CD8-positive, alpha-beta T cell (primary cell): ENCODE measurements at regions of chr13 and their contacts with region 1.

Region 1: DNA sequence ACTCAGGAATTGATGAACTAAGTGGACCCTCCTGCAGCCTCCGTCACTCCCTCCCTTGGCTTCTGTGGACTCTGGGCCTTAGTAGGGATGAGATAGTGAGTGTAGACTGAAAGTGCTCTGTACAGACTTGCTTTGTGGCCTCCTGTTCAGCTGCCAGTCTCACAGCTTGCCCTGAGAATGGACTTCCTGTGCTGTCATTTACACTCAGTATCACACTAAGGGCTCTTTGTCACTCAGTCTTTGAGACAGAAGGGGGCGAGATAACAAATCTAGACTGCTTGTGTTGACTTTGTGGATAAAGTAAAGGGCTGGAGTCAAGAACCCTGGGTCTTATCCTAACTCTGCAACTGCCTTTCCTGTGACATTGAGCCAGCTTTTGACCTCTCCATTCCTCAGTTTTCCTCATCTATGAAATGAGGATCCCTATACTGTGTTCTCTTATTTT is 21.0 kb upstream of the SPRY2 start:
- DNase-seq: peak in 1 of 9 experiments; percentile 45
- ATAC-seq: peak; percentile 40
- H3K4me3 ChIP-seq: no peak overlapping the region
- H3K4me3 Mint-ChIP-seq: no peak overlapping the region
- H3K27ac ChIP-seq: no peak overlapping the region
- H3K27ac Mint-ChIP-seq: no peak overlapping the region
- H3K4me1 ChIP-seq: no peaks in the 10 kb centered on the region
- H3K4me1 Mint-ChIP-seq: peaks cover 2% of the 10 kb centered on the region
- H3K27me3 ChIP-seq: no peaks in the 10 kb centered on the region
- H3K27me3 Mint-ChIP-seq: peaks cover 1% of the 10 kb centered on the region
- CTCF ChIP-seq: no peak

Region 2: DNA sequence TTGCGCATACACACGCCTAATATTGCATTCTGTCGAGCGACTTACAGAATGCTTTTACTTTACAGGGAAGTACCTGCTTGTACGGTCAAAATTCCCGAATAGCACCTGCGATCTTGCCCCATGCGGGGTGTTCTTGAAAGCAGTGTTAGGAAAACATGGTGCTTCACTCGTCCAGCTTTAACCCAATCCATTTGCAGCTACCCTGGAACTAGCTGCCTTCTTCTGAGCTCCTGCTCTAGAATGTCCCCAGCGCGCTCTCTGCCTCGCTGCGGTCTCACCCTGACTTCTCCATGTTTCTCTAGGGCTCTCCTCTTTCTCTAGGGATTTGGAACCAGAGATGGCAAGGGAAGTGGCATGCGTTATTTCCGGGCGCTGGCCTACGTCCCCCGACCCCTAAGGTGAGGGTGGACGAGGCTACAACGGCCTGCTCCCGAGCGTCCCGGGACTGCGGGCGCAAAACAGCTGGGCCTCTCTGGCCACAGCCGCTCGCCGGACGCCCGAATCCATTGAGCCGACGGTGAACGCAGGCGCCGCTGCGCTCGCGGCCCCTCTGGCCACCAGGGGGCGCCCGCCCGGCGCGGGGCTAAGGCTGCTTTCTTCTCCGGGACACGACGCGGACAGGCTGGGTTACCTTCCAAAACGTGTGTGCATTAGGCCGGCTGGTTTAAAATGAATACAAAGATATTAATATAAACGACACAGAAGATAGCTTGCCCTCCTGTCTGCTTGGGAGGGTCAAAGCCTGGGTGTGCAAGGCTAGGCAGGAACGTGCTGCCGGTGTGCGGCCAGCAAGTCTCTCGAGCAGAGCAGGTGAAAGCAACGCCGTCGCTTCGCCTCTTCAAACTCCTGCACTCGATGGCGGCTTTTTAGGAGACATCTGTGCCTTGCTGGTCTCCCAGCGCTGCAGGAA is 19.2 kb before region 1 on chr13:
- CTCF ChIA-PET with region 1: interaction called, 19 read pairs
- POLR2A ChIA-PET with region 1: no interaction called
- intact Hi-C with region 1: no loop called
- DNase-seq: peak; percentile 33 to 81 (median 64)
- ATAC-seq: peak; percentile 50
- H3K4me3 ChIP-seq: peak overlapping the region; percentile 14 to 59
- H3K4me3 Mint-ChIP-seq: peak overlapping the region; percentile 83
- H3K27ac ChIP-seq: no peak overlapping the region
- H3K27ac Mint-ChIP-seq: no peak overlapping the region
- H3K4me1 ChIP-seq: peaks cover 24% of the 10 kb centered on the region
- H3K4me1 Mint-ChIP-seq: peaks cover 27% of the 10 kb centered on the region
- H3K27me3 ChIP-seq: peaks cover 10 to 22% of the 10 kb centered on the region in 2 experiments
- H3K27me3 Mint-ChIP-seq: peaks cover 36% of the 10 kb centered on the region
- CTCF ChIP-seq: peak; percentile 94